Heart right ventricle (tissue), 16 donors: ENCODE measurements at regions of chr11 and their contacts with region 1.

Region 1: DNA sequence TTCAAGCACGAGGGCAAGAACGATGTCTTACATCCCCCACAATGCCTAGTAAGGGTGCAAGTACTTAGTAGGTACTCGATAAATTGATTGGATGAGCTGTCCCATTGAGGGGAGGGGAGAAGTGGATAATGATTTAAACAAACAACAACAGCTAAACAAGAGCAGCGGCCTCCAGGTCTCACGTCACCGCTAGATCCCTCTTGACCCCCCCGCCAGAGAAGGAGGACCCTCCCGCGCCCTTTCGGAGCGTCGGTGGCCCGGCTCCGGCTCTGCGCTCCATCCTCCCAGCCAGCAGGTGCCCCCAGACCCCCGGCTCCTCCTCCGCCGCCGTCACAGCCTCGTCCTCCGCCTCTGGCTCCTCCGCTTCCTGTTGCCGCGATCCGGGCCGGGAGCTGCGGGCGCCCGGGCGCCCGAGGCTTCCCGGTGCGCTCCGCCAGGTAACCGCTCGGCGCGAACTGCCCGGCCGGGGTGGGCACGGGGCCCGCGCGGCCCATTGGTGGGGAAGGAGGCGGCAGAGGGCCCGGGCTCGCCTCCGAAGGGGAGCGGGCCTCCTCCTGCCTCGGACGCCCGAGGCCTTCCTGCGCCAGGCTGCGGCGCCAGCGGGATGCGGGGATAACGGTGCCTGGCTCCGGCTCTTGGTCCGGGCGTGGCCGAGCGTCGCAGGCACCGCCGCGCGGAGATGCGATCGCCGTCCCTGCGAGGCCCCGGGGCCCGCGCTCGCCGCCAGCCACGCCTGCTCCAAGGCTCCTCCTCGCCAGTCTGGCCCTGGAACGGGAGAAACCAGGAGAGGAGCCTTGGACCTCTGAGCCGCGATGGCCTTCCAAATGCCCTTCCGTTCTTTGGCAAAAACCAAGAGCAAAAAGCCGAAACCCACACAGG is at the start of gene TLCD5:
- DNase-seq: peak; percentile 72 to 76
- ATAC-seq: peak; percentile 77 to 86 (median 82)
- H3K4me3 ChIP-seq: peak within 1 kb of the TSS; percentile 40 to 91 (median 72)
- H3K27ac ChIP-seq: peak within 1 kb of the TSS; percentile 84 to 99 (median 94)
- H3K4me1 ChIP-seq: peaks cover 9 to 36% (median 24%) of the 10 kb centered on the region in 9 donors
- H3K27me3 ChIP-seq: peaks cover 0 to 74% (median 0%) of the 10 kb centered on the region in 7 donors
- CTCF ChIP-seq: peak in 4 of 9 donors; percentile 11 to 36 (median 28)
- total RNA-seq, gene TLCD5: 7.4 to 14.5 (median 10.7) TPM

Region 2: DNA sequence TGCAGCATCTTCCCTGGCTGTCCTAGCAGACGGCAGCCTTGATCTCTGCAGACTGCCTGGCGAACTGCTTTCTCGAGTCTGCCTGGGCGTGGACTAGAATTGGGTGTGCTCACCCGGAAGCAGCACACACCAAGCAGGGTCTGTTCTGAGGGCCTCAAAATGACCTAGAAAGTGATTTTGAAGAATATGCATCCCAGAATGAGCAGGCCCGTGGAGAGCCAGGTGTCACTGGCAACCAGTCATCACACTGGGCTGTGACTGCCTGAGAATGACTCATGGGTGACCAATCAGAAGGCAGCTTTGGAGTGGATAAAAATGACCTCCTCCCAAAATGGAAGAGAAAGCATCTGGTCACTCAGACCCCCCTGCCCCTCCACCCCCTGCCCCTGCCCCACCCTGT is 481.3 kb before region 1 on chr11:
- intact Hi-C with region 1: no loop called
- DNase-seq: no peak
- ATAC-seq: peak in 1 of 8 donors; percentile 26
- H3K4me3 ChIP-seq: no peak overlapping the region
- H3K27ac ChIP-seq: no peak overlapping the region
- H3K4me1 ChIP-seq: peaks cover 0 to 10% (median 0%) of the 10 kb centered on the region in 9 donors
- H3K27me3 ChIP-seq: peaks cover 0 to 11% (median 0%) of the 10 kb centered on the region in 7 donors
- CTCF ChIP-seq: no peak

Region 3: GRCh38 chr11:119942583-119943297 is 382.4 kb before region 1 on chr11:
- intact Hi-C with region 1: no loop called
- DNase-seq: no peak
- ATAC-seq: no peak
- H3K4me3 ChIP-seq: no peak overlapping the region
- H3K27ac ChIP-seq: no peak overlapping the region
- H3K4me1 ChIP-seq: peaks cover 0 to 12% (median 4%) of the 10 kb centered on the region in 9 donors
- H3K27me3 ChIP-seq: peaks cover 0 to 16% (median 0%) of the 10 kb centered on the region in 7 donors
- CTCF ChIP-seq: no peak

Region 4: GRCh38 chr11:120682866-120683265 is 357.7 kb after region 1 on chr11:
- intact Hi-C with region 1: loop called in 5 of 10 experiments (anchors 10 kb)
- DNase-seq: no peak
- ATAC-seq: no peak
- H3K4me3 ChIP-seq: no peak overlapping the region
- H3K27ac ChIP-seq: no peak overlapping the region
- H3K4me1 ChIP-seq: no peaks in the 10 kb centered on the region
- H3K27me3 ChIP-seq: peaks cover 3 to 68% (median 41%) of the 10 kb centered on the region in 7 donors
- CTCF ChIP-seq: no peak

Region 5: DNA sequence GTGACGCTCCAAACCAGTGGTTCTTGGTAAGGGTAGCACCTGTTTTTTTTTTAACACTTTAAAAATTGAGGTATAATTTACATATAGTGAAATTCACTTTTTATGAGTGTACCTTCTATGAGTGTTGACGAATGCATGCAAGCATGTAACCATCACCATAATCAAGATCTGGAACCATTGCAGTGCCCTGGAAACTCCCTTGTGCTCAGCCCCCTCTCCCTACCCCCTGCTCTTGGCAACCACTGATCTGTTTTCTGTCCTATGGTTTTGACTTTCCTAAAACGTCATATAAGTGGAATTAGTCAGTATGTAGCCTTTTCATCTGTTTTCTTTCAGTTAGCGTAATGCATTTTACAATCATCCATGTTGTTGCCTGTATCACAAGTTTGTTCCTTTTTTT is 398.6 kb after region 1 on chr11:
- intact Hi-C with region 1: no loop called
- DNase-seq: no peak
- ATAC-seq: no peak
- H3K4me3 ChIP-seq: no peak overlapping the region
- H3K27ac ChIP-seq: no peak overlapping the region
- H3K4me1 ChIP-seq: no peaks in the 10 kb centered on the region
- H3K27me3 ChIP-seq: peaks cover 0 to 35% (median 30%) of the 10 kb centered on the region in 7 donors
- CTCF ChIP-seq: no peak